ENCODE measurements at regions of chr17 and their contacts with region 1.

Region 1: DNA sequence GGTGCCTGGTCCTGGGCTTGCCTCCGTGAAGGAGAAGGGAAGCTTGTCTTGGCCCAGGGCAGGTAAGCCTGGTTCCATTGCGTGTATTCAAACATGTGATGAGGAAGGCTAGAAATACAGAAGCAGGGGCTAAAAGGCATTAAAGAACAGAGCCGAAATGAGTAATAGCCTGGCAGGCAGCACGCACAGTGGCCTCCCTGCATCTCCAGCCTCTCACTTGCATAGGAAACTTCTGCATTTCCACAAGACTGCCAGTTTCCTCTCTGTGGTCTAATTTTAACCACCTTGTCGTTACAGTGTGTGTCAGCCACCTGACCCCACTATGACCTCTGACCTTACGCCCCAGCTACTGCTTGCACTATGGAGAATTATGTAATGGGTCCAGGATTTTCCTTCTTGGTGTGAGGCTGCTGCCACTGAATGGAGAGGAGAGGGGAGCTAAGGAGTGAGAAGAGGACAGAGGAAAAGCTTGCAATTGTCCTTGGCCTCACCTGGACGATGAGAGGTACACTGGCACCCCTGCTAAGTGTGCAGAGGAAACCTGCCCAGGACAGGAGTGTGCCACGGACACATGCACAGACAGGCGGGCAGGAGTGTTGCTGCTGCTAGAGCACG is 32.8 kb downstream of the HIC1 start:
- DNase-seq: peak; percentile 90 to 98 (median 97)
- H3K4me3 ChIP-seq: peak overlapping the region in 4 of 7 experiments; percentile 3 to 74 (median 20)
- H3K27ac ChIP-seq: no peak overlapping the region
- H3K4me1 ChIP-seq: peaks cover 35 to 86% (median 69%) of the 10 kb centered on the region in 4 experiments
- H3K27me3 ChIP-seq: peaks cover 0 to 1% (median 0%) of the 10 kb centered on the region in 5 experiments

Region 2: GRCh38 chr17:1847191-1847590 is 240.5 kb before region 1 on chr17:
- CTCF ChIA-PET with region 1: no interaction called
- POLR2A ChIA-PET with region 1: no interaction called
- DNase-seq: no peak
- H3K4me3 ChIP-seq: no peak overlapping the region
- H3K27ac ChIP-seq: peak overlapping the region in 1 of 2 experiments; percentile 6
- H3K4me1 ChIP-seq: no peaks in the 10 kb centered on the region
- H3K27me3 ChIP-seq: no peaks in the 10 kb centered on the region

Region 3: DNA sequence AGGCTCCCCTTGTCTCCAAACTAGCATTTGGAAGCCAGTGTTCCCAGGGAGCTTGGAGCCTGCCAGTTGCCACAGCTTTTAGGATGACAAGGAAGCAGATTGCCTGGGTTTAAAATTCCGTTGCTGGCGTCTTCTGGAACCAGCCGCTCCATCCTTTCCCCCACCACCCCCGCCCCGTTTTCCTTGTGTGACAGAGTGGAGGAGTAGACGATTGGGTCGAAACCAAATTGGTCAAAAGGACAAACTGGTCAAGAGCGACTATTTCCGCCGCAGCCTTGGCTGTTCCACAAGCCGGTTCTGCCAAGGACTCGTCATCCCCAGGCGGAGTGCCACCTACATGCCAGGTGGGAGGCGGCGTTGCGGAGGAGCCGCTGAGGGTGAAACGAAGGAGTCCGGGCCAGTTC is 166.8 kb before region 1 on chr17:
- CTCF ChIA-PET with region 1: no interaction called
- POLR2A ChIA-PET with region 1: no interaction called
- DNase-seq: no peak
- H3K4me3 ChIP-seq: no peak overlapping the region
- H3K27ac ChIP-seq: no peak overlapping the region
- H3K4me1 ChIP-seq: peaks cover 0 to 2% (median 2%) of the 10 kb centered on the region in 4 experiments
- H3K27me3 ChIP-seq: peaks cover 0 to 2% (median 0%) of the 10 kb centered on the region in 5 experiments

Region 4: DNA sequence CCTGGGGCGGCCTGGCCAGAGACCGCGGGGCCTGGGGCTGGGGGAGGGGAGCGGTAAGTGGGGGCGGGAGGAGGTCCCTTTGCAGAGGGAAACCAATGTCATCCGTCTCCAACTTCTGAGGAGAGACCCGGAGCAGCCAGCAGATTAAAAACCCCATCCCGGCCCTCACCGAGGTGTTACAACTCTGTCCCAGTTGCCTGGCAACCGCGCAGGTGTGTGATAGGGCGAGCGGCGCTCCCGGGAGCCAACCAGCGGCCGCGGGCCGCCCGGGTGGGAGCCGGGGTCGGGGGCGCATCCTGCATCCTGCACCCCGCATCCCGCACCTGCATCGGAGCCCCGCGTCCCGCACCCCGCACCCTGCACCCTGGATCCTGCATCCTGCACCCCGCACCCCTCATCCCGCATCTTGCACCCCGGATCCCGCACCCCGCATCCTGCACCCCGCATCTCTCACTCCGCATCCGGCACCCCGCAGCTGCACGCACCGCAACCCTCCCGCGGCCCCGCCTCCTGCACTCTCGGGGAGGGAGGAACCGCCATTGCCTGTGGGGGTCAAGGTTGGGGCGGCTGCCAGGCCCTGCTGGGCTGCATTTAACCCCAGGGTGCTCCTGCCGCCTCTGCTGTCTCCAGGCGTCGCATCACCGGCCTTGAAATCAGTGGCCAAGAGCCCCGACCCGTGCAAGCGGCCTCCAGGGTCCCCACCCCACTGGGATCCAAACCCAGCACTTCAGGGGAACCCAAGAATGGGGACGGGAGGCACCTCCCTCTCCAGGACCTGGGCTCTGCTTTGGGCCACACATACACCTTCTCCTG is 109.9 kb before region 1 on chr17:
- CTCF ChIA-PET with region 1: no interaction called
- POLR2A ChIA-PET with region 1: no interaction called
- DNase-seq: no peak
- H3K4me3 ChIP-seq: no peak overlapping the region
- H3K27ac ChIP-seq: no peak overlapping the region
- H3K4me1 ChIP-seq: peaks cover 0 to 2% (median 0%) of the 10 kb centered on the region in 4 experiments
- H3K27me3 ChIP-seq: peaks cover 0 to 39% (median 15%) of the 10 kb centered on the region in 5 experiments

Region 5: DNA sequence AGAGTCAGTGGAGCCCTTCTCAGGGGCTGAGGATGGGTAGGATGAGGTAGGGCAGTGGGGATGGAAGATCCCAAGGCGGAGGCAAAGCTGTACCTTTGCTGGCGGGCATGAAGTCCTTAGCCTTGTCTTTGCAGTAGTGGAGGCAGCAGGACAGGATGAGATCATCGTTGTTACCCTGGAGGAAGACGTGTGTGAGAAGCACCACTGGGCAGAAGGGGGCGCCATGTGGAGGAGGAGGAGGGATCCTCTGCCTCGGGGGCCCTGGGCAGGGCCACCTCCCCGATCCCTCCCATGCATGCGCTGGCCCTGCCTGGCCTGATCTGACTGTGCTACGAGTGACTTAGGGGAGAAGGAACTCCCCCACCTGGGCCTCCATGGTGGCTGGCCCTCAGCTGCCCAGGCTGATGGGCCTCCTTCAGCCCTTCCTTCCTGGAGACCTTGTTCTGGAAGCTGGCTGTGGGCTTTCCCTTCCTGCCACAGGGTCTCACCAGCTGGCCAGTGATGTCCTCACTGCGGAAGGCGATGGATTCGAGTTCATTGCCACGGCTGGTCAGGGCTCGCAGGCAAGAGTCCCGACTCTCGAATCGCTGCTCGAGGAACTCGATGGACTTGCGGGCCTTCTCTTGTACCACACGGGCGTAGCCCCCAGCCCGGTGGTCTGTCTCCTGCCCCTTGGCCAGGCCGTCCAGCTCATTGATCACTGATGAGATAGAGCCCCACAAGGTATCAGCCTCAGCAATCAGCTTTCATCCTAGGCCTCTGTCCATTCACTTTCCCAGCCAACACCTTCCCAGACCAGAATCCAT is 22.5 kb before region 1 on chr17:
- CTCF ChIA-PET with region 1: interaction called, 26 read pairs
- POLR2A ChIA-PET with region 1: no interaction called
- DNase-seq: peak in 2 of 3 donors; percentile 64 to 69
- H3K4me3 ChIP-seq: no peak overlapping the region
- H3K27ac ChIP-seq: no peak overlapping the region
- H3K4me1 ChIP-seq: peaks cover 0 to 41% (median 27%) of the 10 kb centered on the region in 4 experiments
- H3K27me3 ChIP-seq: no peaks in the 10 kb centered on the region

Region 6: GRCh38 chr17:2070241-2071023 is 17.3 kb before region 1 on chr17:
- CTCF ChIA-PET with region 1: interaction called, 14 read pairs
- POLR2A ChIA-PET with region 1: no interaction called
- DNase-seq: no peak
- H3K4me3 ChIP-seq: no peak overlapping the region
- H3K27ac ChIP-seq: peak overlapping the region in 1 of 2 experiments; percentile 15
- H3K4me1 ChIP-seq: peaks cover under 1 to 42% (median 17%) of the 10 kb centered on the region in 4 experiments
- H3K27me3 ChIP-seq: no peaks in the 10 kb centered on the region

Region 7: GRCh38 chr17:2075336-2076086 is 12.2 kb before region 1 on chr17:
- CTCF ChIA-PET with region 1: interaction called, 14 read pairs
- POLR2A ChIA-PET with region 1: no interaction called
- DNase-seq: peak in 1 of 3 donors; percentile 40
- H3K4me3 ChIP-seq: peak overlapping the region in 1 of 7 experiments; percentile 5
- H3K27ac ChIP-seq: no peak overlapping the region
- H3K4me1 ChIP-seq: peaks cover 2 to 36% (median 20%) of the 10 kb centered on the region in 4 experiments
- H3K27me3 ChIP-seq: no peaks in the 10 kb centered on the region

Region 8: GRCh38 chr17:2122641-2123302 is 35.1 kb after region 1 on chr17:
- CTCF ChIA-PET with region 1: interaction called, 11 read pairs
- POLR2A ChIA-PET with region 1: interaction called, 6 read pairs
- DNase-seq: peak in 2 of 3 donors; percentile 79 to 84
- H3K4me3 ChIP-seq: peak overlapping the region in 3 of 7 experiments; percentile 24 to 44 (median 37)
- H3K27ac ChIP-seq: no peak overlapping the region
- H3K4me1 ChIP-seq: peaks cover 19 to 39% (median 28%) of the 10 kb centered on the region in 4 experiments
- H3K27me3 ChIP-seq: no peaks in the 10 kb centered on the region

Region 9: GRCh38 chr17:2244545-2245525 is 157.1 kb after region 1 on chr17:
- CTCF ChIA-PET with region 1: interaction called, 35 read pairs
- POLR2A ChIA-PET with region 1: no interaction called
- DNase-seq: peak; percentile 70 to 85 (median 79)
- H3K4me3 ChIP-seq: no peak overlapping the region
- H3K27ac ChIP-seq: no peak overlapping the region
- H3K4me1 ChIP-seq: no peaks in the 10 kb centered on the region
- H3K27me3 ChIP-seq: no peaks in the 10 kb centered on the region